Activated CD4-positive, alpha-beta T cell treated with anti-CD3 and anti-CD28 coated beads for 36 hours (primary cell): ENCODE measurements at regions of chr4 and their contacts with region 1.

Region 1: GRCh38 chr4:175614890-175615289 is 197.2 kb downstream of the GPM6A start:
- DNase-seq: no peak
- ATAC-seq: no peak
- H3K4me3 Mint-ChIP-seq: no peak overlapping the region
- H3K27ac Mint-ChIP-seq: no peak overlapping the region
- H3K4me1 Mint-ChIP-seq: no peaks in the 10 kb centered on the region
- H3K27me3 Mint-ChIP-seq: no peaks in the 10 kb centered on the region

Region 2: GRCh38 chr4:175325230-175325629 is 289.7 kb before region 1 on chr4:
- CTCF ChIA-PET with region 1: no interaction called
- POLR2A ChIA-PET with region 1: no interaction called
- intact Hi-C with region 1: loop called in 1 of 2 experiments (anchors 5 kb)
- DNase-seq: no peak
- ATAC-seq: no peak
- H3K4me3 Mint-ChIP-seq: no peak overlapping the region
- H3K27ac Mint-ChIP-seq: no peak overlapping the region
- H3K4me1 Mint-ChIP-seq: no peaks in the 10 kb centered on the region
- H3K27me3 Mint-ChIP-seq: no peaks in the 10 kb centered on the region

Region 3: DNA sequence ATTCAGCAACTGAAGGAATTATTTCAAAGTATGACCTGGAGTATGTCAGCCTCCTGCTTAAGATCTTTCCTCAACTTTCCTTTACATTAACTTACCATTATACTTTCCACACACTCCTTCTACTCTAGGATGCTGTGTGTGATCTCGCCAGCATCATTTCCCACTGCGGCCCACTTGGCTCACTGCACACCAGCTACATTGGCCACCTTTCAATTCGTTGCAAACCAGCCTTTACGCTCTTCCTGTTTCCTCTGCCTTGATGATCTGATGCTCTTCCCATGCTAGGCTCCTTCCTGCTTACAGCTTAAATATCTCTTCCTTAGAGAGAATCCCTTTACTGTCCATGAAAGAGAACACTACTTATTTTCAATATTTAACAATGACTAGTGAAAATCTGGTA is 102.1 kb after region 1 on chr4:
- CTCF ChIA-PET with region 1: no interaction called
- POLR2A ChIA-PET with region 1: no interaction called
- intact Hi-C with region 1: no loop called
- DNase-seq: no peak
- ATAC-seq: no peak
- H3K4me3 Mint-ChIP-seq: no peak overlapping the region
- H3K27ac Mint-ChIP-seq: no peak overlapping the region
- H3K4me1 Mint-ChIP-seq: no peaks in the 10 kb centered on the region
- H3K27me3 Mint-ChIP-seq: no peaks in the 10 kb centered on the region

Region 4: DNA sequence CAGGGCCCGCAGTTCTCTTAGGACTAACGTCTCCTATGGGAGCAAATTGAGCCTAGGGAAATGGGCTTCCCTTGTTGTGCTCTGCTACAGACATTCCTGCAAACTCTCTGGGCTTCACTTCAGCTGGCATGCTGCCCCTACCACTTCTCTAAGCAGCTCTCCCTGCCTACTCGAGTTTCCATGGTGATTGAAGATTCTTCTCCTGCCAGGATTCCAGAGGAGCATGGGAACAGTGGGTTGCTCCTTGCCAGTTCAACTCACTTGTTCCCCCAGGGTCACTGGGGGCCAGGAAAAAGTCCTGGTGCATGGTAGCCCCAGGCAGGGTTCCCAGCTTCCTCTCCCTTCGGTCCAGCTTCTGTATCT is 429.7 kb after region 1 on chr4:
- CTCF ChIA-PET with region 1: no interaction called
- POLR2A ChIA-PET with region 1: no interaction called
- intact Hi-C with region 1: no loop called
- DNase-seq: no peak
- ATAC-seq: no peak
- H3K4me3 Mint-ChIP-seq: no peak overlapping the region
- H3K27ac Mint-ChIP-seq: no peak overlapping the region
- H3K4me1 Mint-ChIP-seq: no peaks in the 10 kb centered on the region
- H3K27me3 Mint-ChIP-seq: peaks cover 28% of the 10 kb centered on the region